ENCODE measurements at regions of chr6 and their contacts with region 1.

Region 1: GRCh38 chr6:148342357-148343046 is at the start of gene SASH1:
- DNase-seq: peak; percentile 72
- H3K4me3 Mint-ChIP-seq: peak within 1 kb of the TSS; percentile 83
- H3K27ac Mint-ChIP-seq: peak within 1 kb of the TSS; percentile 16
- H3K4me1 Mint-ChIP-seq: peaks cover 12% of the 10 kb centered on the region
- H3K27me3 Mint-ChIP-seq: peaks cover 48% of the 10 kb centered on the region
- total RNA-seq, gene SASH1: 0.44 and 0.66 TPM in 2 replicates

Region 2: GRCh38 chr6:148203970-148204369 is 138.5 kb before region 1 on chr6:
- intact Hi-C with region 1: loop called (anchors 10 kb)
- DNase-seq: peak; percentile 93
- H3K4me3 Mint-ChIP-seq: peak overlapping the region; percentile 44
- H3K27ac Mint-ChIP-seq: peak overlapping the region; percentile 88
- H3K4me1 Mint-ChIP-seq: peaks cover 17% of the 10 kb centered on the region
- H3K27me3 Mint-ChIP-seq: peaks cover 72% of the 10 kb centered on the region